ENCODE measurements at regions of chr5 and their contacts with region 1.

Region 1: GRCh38 chr5:116084871-116085715 is at the start of gene COMMD10:
- DNase-seq: peak; percentile 74
- H3K4me3 Mint-ChIP-seq: peak within 1 kb of the TSS; percentile 82
- H3K27ac Mint-ChIP-seq: peak within 1 kb of the TSS; percentile 94
- H3K4me1 Mint-ChIP-seq: peaks cover 13% of the 10 kb centered on the region
- H3K27me3 Mint-ChIP-seq: no peaks in the 10 kb centered on the region
- CTCF ChIP-seq: no peak
- total RNA-seq, gene COMMD10: 18.6 and 23.2 TPM in 2 replicates

Region 2: GRCh38 chr5:116097301-116097700 is 12.2 kb after region 1 on chr5:
- CTCF ChIA-PET with region 1: no interaction called
- POLR2A ChIA-PET with region 1: interaction called, 11 read pairs
- intact Hi-C with region 1: no loop called
- DNase-seq: no peak
- H3K4me3 Mint-ChIP-seq: no peak overlapping the region
- H3K27ac Mint-ChIP-seq: no peak overlapping the region
- H3K4me1 Mint-ChIP-seq: no peaks in the 10 kb centered on the region
- H3K27me3 Mint-ChIP-seq: no peaks in the 10 kb centered on the region
- CTCF ChIP-seq: no peak